ENCODE measurements at regions of chr3 and their contacts with region 1.

Region 1: GRCh38 chr3:27712136-27713077 is 9.7 kb downstream of the EOMES start:
- DNase-seq: peak; percentile 89
- ATAC-seq: peak; percentile 94
- H3K4me3 Mint-ChIP-seq: peak overlapping the region; percentile 80
- H3K27ac Mint-ChIP-seq: peak overlapping the region; percentile 73
- H3K4me1 Mint-ChIP-seq: peaks cover 23% of the 10 kb centered on the region
- H3K27me3 Mint-ChIP-seq: peaks cover 51% of the 10 kb centered on the region

Region 2: DNA sequence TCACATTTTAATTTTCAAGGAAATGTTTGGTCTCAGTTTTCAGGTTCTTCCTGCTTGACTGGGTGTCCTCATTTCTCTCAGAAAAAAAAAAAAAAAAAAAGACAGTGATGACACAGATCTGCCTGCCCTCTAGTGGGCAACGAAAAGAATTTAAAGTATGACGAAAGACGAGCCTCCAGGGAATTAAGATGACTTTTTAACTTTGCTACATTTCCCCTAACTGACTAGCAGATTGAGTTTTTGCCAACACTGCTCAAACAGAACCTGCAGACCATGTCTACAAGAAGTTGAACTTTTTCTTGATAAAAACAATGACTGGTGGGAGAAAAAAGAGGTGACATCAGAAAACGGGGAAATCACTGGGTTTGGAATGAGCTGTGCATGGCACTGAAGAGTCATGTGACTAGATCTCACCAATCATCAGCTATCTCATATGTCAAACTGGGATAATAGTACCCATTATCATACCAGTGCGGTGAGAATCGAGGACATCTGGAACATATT is 31.1 kb before region 1 on chr3:
- CTCF ChIA-PET with region 1: interaction called, 10 read pairs
- POLR2A ChIA-PET with region 1: interaction called, 10 read pairs
- intact Hi-C with region 1: no loop called
- DNase-seq: peak; percentile 49
- ATAC-seq: peak; percentile 84
- H3K4me3 Mint-ChIP-seq: peak overlapping the region; percentile 44
- H3K27ac Mint-ChIP-seq: peak overlapping the region; percentile 80
- H3K4me1 Mint-ChIP-seq: peaks cover 8% of the 10 kb centered on the region
- H3K27me3 Mint-ChIP-seq: no peaks in the 10 kb centered on the region

Region 3: GRCh38 chr3:27905625-27906024 is 193.2 kb after region 1 on chr3:
- CTCF ChIA-PET with region 1: no interaction called
- POLR2A ChIA-PET with region 1: no interaction called
- intact Hi-C with region 1: loop called in 1 of 2 experiments (anchors 10 kb)
- DNase-seq: peak; percentile 15
- ATAC-seq: peak; percentile 72
- H3K4me3 Mint-ChIP-seq: no peak overlapping the region
- H3K27ac Mint-ChIP-seq: no peak overlapping the region
- H3K4me1 Mint-ChIP-seq: peaks cover 33% of the 10 kb centered on the region
- H3K27me3 Mint-ChIP-seq: no peaks in the 10 kb centered on the region

Region 4: GRCh38 chr3:28241221-28242160 is 529.1 kb after region 1 on chr3 and contains the start of gene CMC1:
- CTCF ChIA-PET with region 1: no interaction called
- POLR2A ChIA-PET with region 1: no interaction called
- intact Hi-C with region 1: loop called in 1 of 2 experiments (anchors 2 kb)
- DNase-seq: peak; percentile 96
- ATAC-seq: peak; percentile 97
- H3K4me3 Mint-ChIP-seq: peak within 1 kb of the TSS; percentile 83
- H3K27ac Mint-ChIP-seq: peak within 1 kb of the TSS; percentile 91
- H3K4me1 Mint-ChIP-seq: peaks cover 45% of the 10 kb centered on the region
- H3K27me3 Mint-ChIP-seq: no peaks in the 10 kb centered on the region
- total RNA-seq, gene CMC1: 21.6 to 28.3 TPM

Region 5: GRCh38 chr3:28317438-28318022 is 605.1 kb after region 1 on chr3:
- CTCF ChIA-PET with region 1: interaction called, 15 read pairs
- POLR2A ChIA-PET with region 1: no interaction called
- intact Hi-C with region 1: no loop called
- DNase-seq: peak; percentile 36
- ATAC-seq: peak; percentile 93
- H3K4me3 Mint-ChIP-seq: no peak overlapping the region
- H3K27ac Mint-ChIP-seq: no peak overlapping the region
- H3K4me1 Mint-ChIP-seq: peaks cover 4% of the 10 kb centered on the region
- H3K27me3 Mint-ChIP-seq: no peaks in the 10 kb centered on the region

Region 6: GRCh38 chr3:28348629-28349483 is 636.4 kb after region 1 on chr3 and contains the starts of genes AZI2 and ZCWPW2:
- CTCF ChIA-PET with region 1: interaction called, 3 read pairs
- POLR2A ChIA-PET with region 1: no interaction called
- intact Hi-C with region 1: loop called (anchors 1 to 5 kb)
- DNase-seq: peak; percentile 96
- ATAC-seq: peak; percentile 87
- H3K4me3 Mint-ChIP-seq: peak within 1 kb of the TSS; percentile 98
- H3K27ac Mint-ChIP-seq: peak within 1 kb of the TSS; percentile 98
- H3K4me1 Mint-ChIP-seq: peaks cover 43% of the 10 kb centered on the region
- H3K27me3 Mint-ChIP-seq: no peaks in the 10 kb centered on the region
- total RNA-seq, gene AZI2: 52.3 to 78.8 TPM
- total RNA-seq, gene ZCWPW2: 0.37 to 0.39 TPM

Measured in activated CD4-positive, alpha-beta T cell treated with anti-CD3 and anti-CD28 coated beads for 36 hours (primary cell).